GM12878 (cell line): ENCODE measurements at regions of chr10 and their contacts with region 1.

Region 1: DNA sequence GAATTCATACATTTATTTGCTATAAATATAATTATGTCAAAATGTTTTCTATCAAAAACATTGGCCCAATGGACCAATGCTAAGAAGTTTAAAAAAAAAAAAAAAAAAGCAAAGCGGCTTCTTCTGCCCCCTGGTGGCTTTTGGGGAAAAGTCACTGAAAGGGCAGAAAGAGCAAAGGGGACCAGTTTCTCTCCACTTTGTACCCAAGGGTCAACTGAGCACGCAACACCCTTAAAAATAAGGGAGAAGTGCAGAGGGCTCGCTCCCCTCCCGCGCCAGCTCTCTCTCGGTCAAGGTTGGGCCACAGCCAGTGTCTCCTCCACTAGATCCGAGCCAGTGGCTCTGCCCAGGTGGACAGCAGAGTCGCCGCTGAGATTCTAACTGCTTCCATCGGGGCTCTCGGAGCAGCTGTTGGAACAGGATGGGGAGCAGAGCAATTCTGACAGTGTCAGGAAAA is 136.4 kb upstream of the FGFR2 start:
- DNase-seq: no peak
- ATAC-seq: peak; percentile 57
- H3K4me3 ChIP-seq: no peak overlapping the region
- H3K27ac ChIP-seq: no peak overlapping the region
- H3K4me1 ChIP-seq: no peaks in the 10 kb centered on the region
- H3K27me3 ChIP-seq: peaks cover 0 to 4% of the 10 kb centered on the region in 2 experiments; a peak in 1 of 4 replicates
- CTCF ChIP-seq: peak; percentile 58 to 65 (median 60); a peak in 5 of 6 replicates
- EP300 ChIP-seq: no peak
- POLR2A ChIP-seq: no peak
- RAD21 ChIP-seq: peak; percentile 63

Region 2: DNA sequence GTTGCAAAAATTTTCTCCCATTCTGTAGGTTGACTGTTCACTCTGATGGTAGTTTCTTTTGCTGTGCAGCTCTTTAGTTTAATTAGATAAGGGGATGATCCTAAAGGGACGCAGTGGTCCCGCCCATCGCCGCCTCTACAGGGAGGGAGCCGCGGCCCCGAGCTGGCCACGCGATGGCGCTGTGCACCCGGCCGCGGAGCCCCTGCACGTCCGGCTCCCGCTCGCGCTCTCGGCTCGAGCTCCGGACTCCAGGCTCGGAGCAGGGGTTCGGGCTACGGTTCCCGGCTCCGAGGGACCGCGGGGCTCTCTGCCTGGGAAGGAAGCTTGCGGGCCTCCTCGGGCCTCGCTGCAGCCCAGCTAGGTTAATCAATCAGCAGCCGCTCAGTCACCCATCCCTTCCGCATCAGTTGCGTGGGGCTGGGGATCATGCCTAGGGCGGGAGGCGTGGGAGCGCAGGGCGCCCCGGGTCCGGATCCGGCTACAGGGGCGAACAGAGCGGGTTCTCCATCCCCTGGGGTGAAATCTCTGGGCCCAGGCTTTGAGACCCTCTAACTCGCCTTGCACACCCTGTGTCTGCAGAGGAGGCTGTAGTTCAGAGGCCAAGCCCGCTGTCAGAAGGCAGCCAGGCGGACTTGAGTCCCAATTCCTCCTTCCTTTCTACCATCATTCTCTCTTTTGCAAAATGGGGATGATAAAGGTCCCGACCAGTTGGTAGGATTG is 785.6 kb before region 1 on chr10:
- CTCF ChIA-PET with region 1: interaction called, 3 read pairs
- POLR2A ChIA-PET with region 1: no interaction called
- RAD21 ChIA-PET with region 1: interaction called, 3 read pairs
- SMC1A ChIA-PET with region 1: interaction called, 6 read pairs
- in situ Hi-C with region 1: loop called (anchors 5 kb)
- intact Hi-C with region 1: no loop called
- DNase-seq: no peak
- ATAC-seq: peak; percentile 100
- H3K4me3 ChIP-seq: no peak overlapping the region
- H3K27ac ChIP-seq: no peak overlapping the region
- H3K4me1 ChIP-seq: no peaks in the 10 kb centered on the region
- H3K27me3 ChIP-seq: peaks cover 8 to 11% of the 10 kb centered on the region in 2 experiments
- CTCF ChIP-seq: peak; percentile 68 to 83 (median 77); a peak in 5 of 6 replicates
- EP300 ChIP-seq: no peak
- POLR2A ChIP-seq: no peak
- RAD21 ChIP-seq: peak; percentile 73

Region 3: DNA sequence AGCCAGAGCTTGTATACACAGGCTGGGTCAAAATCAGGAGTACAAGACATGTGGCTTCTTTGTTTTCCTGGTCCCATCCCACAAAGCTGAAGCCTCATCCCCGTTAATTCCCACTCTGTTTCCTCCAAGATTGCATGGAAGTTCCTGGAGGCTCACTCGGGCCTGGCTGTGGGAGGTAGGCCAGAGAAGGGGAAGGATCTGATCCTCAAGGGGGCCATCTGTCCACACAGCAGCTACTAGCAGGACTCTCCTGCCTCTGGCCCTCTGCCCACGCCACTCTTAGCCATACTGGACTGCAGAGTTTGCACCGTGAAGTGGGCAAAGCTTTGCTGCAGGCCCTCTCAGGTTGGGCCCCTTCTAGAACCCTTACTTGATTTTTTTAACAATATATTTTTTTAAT is 297.0 kb before region 1 on chr10:
- CTCF ChIA-PET with region 1: no interaction called
- POLR2A ChIA-PET with region 1: no interaction called
- RAD21 ChIA-PET with region 1: no interaction called
- SMC1A ChIA-PET with region 1: no interaction called
- in situ Hi-C with region 1: no loop called
- intact Hi-C with region 1: no loop called
- DNase-seq: no peak
- ATAC-seq: no peak
- H3K4me3 ChIP-seq: no peak overlapping the region
- H3K27ac ChIP-seq: no peak overlapping the region
- H3K4me1 ChIP-seq: no peaks in the 10 kb centered on the region
- H3K27me3 ChIP-seq: no peaks in the 10 kb centered on the region
- CTCF ChIP-seq: no peak
- EP300 ChIP-seq: no peak
- POLR2A ChIP-seq: no peak
- RAD21 ChIP-seq: no peak

Region 4: GRCh38 chr10:121988356-121989316 is 254.0 kb after region 1 on chr10 and contains the start of gene TACC2:
- CTCF ChIA-PET with region 1: no interaction called
- POLR2A ChIA-PET with region 1: no interaction called
- RAD21 ChIA-PET with region 1: no interaction called
- SMC1A ChIA-PET with region 1: no interaction called
- in situ Hi-C with region 1: no loop called
- intact Hi-C with region 1: no loop called
- DNase-seq: no peak
- ATAC-seq: no peak
- H3K4me3 ChIP-seq: no peak within 1 kb of the TSS
- H3K27ac ChIP-seq: no peak within 1 kb of the TSS
- H3K4me1 ChIP-seq: no peaks in the 10 kb centered on the region
- H3K27me3 ChIP-seq: no peaks in the 10 kb centered on the region
- CTCF ChIP-seq: no peak
- EP300 ChIP-seq: no peak
- POLR2A ChIP-seq: no peak
- RAD21 ChIP-seq: no peak
- polyA plus RNA-seq, gene TACC2: not detected